AG04449 (cell line): ENCODE measurements at regions of chr17 and their contacts with region 1.

Region 1: GRCh38 chr17:38982858-38983746 is 15.9 kb upstream of the FBXO47 start:
- DNase-seq: no peak
- H3K4me3 ChIP-seq: no peak overlapping the region
- CTCF ChIP-seq: peak; percentile 64

Region 2: DNA sequence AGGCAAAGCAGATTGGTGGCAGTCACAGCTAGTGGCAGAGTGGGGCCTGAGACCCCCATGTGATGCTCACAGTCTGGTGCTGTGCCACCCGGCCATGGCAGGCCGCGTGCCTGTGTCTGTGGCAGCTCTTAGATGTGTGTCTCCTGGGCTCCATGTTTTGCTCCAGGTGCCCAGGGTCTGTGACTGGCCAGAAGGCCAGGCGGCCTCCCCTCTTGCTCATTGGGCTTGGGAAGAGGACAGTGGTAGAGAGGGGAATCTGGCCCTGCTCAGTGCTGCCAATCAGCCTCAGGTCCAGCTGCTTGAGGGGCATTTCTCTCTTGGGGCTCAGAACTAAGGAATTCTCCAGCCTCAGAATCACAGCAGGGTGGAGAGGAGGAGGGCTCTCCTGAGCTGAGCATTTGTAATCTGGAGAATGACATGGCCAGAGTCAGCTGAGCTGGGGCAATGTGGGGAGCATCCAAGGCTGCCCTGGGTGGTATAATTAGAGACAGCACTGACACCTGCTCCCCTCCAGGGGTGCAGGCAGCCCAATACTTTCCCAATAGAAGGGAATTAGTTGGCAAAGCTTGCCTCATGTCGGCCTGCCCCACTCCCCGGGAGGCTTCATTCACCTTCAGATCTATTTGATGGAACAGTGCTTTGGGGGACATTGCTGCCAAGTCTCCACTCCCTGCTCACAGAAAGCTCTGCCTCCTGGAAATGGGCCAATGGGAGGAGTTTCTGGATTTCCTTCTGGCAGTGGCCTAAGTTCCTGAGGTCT is 60.4 kb before region 1 on chr17:
- CTCF ChIA-PET with region 1: interaction called, 15 read pairs
- POLR2A ChIA-PET with region 1: no interaction called
- DNase-seq: no peak
- H3K4me3 ChIP-seq: no peak overlapping the region
- CTCF ChIP-seq: no peak

Region 3: DNA sequence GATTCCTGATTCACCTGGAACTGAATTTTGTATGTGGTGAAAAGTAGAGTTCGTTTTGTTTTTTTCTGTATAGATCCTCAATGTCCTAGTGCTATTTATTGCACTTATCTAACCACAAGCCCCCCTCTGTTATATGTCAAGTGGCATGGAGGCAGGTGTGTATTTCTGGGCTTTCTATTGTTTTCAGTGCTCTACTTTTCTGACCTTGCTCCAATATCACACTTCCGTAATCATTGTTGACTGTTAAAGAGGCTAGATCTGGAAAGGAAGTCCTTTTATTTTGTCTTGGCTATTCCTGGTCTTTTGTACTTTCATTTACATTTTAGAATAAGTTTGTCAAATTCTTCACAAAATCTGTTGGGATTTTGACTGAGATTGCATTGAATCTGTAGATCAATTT is 10.9 kb after region 1 on chr17:
- CTCF ChIA-PET with region 1: interaction called, 27 read pairs
- POLR2A ChIA-PET with region 1: no interaction called
- DNase-seq: no peak
- H3K4me3 ChIP-seq: no peak overlapping the region
- CTCF ChIP-seq: no peak

Region 4: GRCh38 chr17:39069114-39069756 is 86.1 kb after region 1 on chr17:
- CTCF ChIA-PET with region 1: interaction called, 10 read pairs
- POLR2A ChIA-PET with region 1: no interaction called
- DNase-seq: no peak
- H3K4me3 ChIP-seq: no peak overlapping the region
- CTCF ChIP-seq: peak; percentile 65

Region 5: GRCh38 chr17:39107973-39108372 is 124.9 kb after region 1 on chr17:
- CTCF ChIA-PET with region 1: no interaction called
- POLR2A ChIA-PET with region 1: no interaction called
- DNase-seq: no peak
- H3K4me3 ChIP-seq: no peak overlapping the region
- CTCF ChIP-seq: no peak

Region 6: DNA sequence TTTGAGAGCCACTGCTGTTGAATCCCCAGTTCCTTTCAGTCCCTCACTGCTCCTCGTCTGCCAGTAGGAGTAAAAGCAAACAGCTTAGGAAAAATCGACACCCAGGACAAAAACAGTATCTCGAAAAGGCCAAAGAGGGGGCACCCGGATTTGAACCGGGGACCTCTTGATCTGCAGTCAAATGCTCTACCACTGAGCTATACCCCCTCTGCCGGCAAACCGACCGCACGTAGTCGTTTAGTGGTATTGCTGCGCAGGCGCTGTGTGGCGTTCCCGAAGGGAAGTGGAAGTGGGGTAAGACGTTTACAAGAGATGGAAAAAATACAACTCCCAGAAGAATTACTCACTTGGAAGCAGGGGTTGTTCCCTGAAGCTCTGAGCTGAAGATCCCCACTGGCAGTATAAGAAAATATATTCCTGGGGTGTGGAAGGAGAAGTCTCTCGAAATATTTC is 170.5 kb after region 1 on chr17:
- CTCF ChIA-PET with region 1: interaction called, 382 read pairs
- POLR2A ChIA-PET with region 1: interaction called, 9 read pairs
- DNase-seq: no peak
- H3K4me3 ChIP-seq: peak overlapping the region; percentile 96
- CTCF ChIP-seq: no peak

Region 7: GRCh38 chr17:39174907-39175694 is 192.0 kb after region 1 on chr17:
- CTCF ChIA-PET with region 1: interaction called, 84 read pairs
- POLR2A ChIA-PET with region 1: no interaction called
- DNase-seq: no peak
- H3K4me3 ChIP-seq: no peak overlapping the region
- CTCF ChIP-seq: peak; percentile 87

Region 8: GRCh38 chr17:39244600-39245570 is 261.8 kb after region 1 on chr17:
- CTCF ChIA-PET with region 1: interaction called, 60 read pairs
- POLR2A ChIA-PET with region 1: no interaction called
- DNase-seq: no peak
- H3K4me3 ChIP-seq: no peak overlapping the region
- CTCF ChIP-seq: peak; percentile 90